ENCODE measurements at regions of chr10 and their contacts with region 1.

Region 1: GRCh38 chr10:26269754-26270153 is 53.2 kb downstream of the GAD2 start:
- DNase-seq: no peak
- H3K4me3 Mint-ChIP-seq: no peak overlapping the region
- H3K27ac Mint-ChIP-seq: no peak overlapping the region
- H3K4me1 Mint-ChIP-seq: no peaks in the 10 kb centered on the region
- H3K27me3 Mint-ChIP-seq: peaks cover 11% of the 10 kb centered on the region

Region 2: DNA sequence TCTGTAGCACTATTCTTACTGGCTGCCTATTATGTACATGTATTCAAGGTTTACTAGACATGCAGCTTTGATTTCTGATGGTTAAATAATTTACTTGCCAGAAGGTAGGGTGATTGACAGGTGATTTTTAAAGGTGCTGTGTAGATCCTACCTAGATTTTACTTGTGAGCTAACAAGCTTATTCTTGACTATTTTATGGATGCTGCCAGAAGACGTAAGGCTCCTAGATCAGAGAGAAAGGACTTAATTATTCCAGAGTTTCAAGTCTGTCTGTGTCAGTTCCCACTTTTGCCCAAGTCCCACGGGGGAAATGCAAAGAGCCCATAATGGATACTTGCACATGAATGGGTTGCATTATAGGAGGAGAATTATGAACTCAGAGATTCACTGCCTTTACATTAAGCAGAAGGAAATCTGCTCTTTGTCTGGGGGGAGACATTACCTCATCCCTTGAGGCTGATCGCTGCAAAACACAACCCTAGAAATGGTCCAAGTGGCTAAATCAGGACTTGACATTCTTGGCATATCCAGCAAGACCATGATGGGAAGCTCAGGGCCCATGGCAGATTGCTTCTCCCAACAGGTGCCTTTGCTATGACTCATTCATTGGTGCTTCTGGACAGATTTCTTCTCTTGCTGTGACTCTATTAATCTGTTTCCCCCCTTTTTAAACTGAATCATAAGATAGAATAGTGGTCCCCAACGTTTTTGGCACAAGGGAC is 1062.9 kb before region 1 on chr10:
- CTCF ChIA-PET with region 1: no interaction called
- intact Hi-C with region 1: no loop called
- DNase-seq: no peak
- H3K4me3 Mint-ChIP-seq: no peak overlapping the region
- H3K27ac Mint-ChIP-seq: no peak overlapping the region
- H3K4me1 Mint-ChIP-seq: no peaks in the 10 kb centered on the region
- H3K27me3 Mint-ChIP-seq: peaks cover 8% of the 10 kb centered on the region

Region 3: DNA sequence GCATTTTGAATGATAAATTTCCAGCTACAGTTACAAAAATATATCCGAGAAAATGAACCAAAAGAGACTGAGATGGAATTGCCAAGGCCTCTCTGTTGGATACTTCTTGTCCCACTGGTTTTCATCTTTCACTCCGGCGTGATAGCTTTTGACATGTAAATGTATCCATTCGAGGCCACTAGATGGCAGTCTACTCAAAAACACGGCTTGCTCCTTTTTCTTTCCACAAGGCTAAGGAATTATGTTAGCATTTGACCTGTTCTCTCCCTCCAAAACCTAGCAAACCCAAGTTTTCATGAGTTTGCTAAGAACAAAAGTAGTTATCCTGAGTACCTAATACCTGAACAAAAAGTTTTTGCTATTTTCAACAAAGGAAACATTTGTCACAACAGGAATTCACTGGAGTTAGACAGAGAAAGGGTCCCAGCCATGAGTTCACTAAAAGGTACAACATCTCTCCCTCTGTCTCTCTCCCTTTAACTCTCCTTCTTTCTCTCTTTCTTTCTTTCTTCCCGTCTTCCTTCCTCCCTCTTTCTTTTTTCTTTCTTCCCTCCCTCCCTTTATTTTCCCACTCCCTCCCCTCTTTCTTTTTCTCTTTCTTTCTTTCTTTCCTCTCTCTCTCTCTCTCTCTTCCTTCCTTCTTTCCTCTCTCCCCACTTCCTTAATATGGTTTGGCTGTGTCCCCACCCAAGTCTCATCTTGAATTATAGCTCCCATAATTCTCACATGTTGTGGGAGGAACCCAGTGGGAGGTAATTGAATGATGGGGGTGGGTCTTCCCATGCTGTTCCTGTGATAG is 543.6 kb before region 1 on chr10:
- CTCF ChIA-PET with region 1: interaction called, 5 read pairs
- intact Hi-C with region 1: loop called (anchors 1 kb)
- DNase-seq: peak; percentile 43
- H3K4me3 Mint-ChIP-seq: no peak overlapping the region
- H3K27ac Mint-ChIP-seq: no peak overlapping the region
- H3K4me1 Mint-ChIP-seq: no peaks in the 10 kb centered on the region
- H3K27me3 Mint-ChIP-seq: peaks cover 25% of the 10 kb centered on the region

Region 4: DNA sequence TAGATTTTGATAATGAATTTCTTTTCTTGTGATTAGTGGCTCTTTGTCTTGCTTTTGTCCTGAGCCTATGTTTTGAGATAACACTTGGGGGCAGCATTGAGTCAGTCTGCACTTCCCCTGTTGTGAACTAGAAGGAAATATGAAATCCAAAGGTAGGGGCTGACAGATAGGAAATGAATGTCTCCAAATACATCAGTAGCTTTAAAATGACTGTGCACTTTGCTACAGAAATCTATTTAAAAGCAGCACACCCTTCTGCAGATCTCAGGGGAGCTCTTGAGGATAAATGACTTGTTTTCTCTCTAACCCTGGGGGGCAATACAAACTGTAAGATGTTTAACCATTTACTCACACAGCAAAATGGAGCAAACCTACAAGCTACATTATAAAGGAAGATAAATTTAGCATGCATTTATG is 511.7 kb before region 1 on chr10:
- CTCF ChIA-PET with region 1: interaction called, 4 read pairs
- intact Hi-C with region 1: loop called (anchors 10 kb)
- DNase-seq: peak; percentile 32
- H3K4me3 Mint-ChIP-seq: no peak overlapping the region
- H3K27ac Mint-ChIP-seq: no peak overlapping the region
- H3K4me1 Mint-ChIP-seq: no peaks in the 10 kb centered on the region
- H3K27me3 Mint-ChIP-seq: peaks cover 4% of the 10 kb centered on the region

Region 5: DNA sequence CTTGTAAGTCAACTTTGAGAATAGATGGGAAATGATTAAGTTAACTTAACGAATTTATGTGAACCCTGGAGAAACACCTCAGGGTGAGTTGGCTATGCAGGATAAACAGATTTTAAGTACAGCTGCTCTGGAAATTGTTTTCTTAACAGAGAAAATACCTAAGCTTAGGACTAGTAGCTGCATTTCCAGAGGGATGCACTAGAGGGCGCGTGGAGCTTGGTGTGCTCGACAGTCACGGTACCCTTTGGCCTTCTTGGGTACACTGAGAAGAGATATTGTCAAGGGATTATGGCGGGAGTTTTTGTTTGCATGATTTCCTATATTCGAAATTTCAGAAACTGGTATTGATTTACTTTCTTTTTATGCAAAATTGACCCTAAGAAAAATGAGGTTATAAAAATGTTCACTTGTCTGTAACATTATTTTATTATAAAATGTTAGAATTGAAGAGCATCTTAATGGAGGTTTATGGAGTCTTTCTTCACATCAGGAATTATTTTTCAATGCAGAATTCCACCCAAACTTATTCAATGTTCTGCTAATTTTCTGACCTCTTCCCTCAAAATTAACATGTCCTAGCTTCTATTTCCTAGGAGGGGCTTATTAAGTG is 394.1 kb before region 1 on chr10:
- CTCF ChIA-PET with region 1: interaction called, 24 read pairs
- intact Hi-C with region 1: loop called (anchors 1 kb)
- DNase-seq: peak; percentile 85
- H3K4me3 Mint-ChIP-seq: no peak overlapping the region
- H3K27ac Mint-ChIP-seq: no peak overlapping the region
- H3K4me1 Mint-ChIP-seq: no peaks in the 10 kb centered on the region
- H3K27me3 Mint-ChIP-seq: peaks cover 4% of the 10 kb centered on the region

Region 6: DNA sequence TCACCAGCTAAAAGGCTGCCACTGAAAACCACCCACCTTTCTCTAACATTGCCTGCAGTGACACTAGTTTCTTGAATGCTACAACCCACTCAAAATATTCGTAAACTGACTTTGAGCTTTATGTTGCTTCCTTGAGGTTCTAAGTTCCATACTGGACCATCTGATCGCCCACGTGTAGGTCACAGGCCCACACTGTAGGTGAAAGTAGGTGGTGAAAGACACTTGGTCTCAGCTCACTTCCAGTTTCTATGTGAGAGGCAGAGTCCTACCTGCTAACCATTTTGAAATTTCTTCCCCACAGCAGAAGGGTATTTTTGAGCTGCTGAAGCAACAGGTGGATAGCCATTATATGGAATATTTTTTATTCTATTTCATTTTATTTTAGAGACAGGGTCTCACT is 238.5 kb before region 1 on chr10:
- CTCF ChIA-PET with region 1: no interaction called
- intact Hi-C with region 1: no loop called
- DNase-seq: no peak
- H3K4me3 Mint-ChIP-seq: no peak overlapping the region
- H3K27ac Mint-ChIP-seq: no peak overlapping the region
- H3K4me1 Mint-ChIP-seq: no peaks in the 10 kb centered on the region
- H3K27me3 Mint-ChIP-seq: peaks cover 5% of the 10 kb centered on the region

Region 7: DNA sequence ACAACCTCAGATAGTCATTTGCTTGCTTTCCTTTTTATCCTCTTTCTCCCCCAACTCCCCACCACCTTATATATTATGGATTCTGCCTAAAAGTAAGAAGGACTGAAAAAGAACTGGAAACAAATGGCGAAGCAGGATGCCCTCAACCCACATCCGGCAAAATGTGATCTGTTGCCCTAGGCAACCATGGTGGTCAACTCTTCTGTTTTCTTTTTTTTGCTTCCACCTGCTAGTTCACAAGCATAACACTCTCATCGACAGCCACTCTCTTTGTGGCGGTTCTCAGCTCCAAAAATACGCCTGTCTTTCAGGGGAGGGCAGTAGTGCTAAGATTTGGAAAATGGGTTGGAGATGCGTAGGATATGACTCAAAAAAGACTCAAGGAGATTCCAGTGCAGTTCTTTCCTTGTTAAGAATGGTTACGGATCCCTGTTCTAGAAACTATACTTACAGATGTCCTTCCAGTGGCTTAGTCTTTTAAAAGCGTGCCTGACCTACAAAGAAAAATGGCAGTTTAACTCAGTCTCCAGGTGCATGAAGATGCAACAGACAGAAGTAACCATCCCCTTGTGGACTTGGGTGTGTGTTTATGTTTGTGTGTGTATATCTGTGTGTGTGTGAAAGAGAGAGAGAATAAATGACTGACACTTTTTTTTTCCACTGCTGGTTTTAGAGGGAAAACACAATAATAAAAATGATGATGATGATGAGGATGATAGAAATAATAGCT is 179.1 kb after region 1 on chr10:
- CTCF ChIA-PET with region 1: no interaction called
- intact Hi-C with region 1: no loop called
- DNase-seq: peak; percentile 85
- H3K4me3 Mint-ChIP-seq: peak overlapping the region; percentile 54
- H3K27ac Mint-ChIP-seq: peak overlapping the region; percentile 88
- H3K4me1 Mint-ChIP-seq: peaks cover 87% of the 10 kb centered on the region
- H3K27me3 Mint-ChIP-seq: no peaks in the 10 kb centered on the region